Posterior cingulate gyrus (tissue), 11 donors: ENCODE measurements at regions of chr14 and their contacts with region 1.

Region 1: DNA sequence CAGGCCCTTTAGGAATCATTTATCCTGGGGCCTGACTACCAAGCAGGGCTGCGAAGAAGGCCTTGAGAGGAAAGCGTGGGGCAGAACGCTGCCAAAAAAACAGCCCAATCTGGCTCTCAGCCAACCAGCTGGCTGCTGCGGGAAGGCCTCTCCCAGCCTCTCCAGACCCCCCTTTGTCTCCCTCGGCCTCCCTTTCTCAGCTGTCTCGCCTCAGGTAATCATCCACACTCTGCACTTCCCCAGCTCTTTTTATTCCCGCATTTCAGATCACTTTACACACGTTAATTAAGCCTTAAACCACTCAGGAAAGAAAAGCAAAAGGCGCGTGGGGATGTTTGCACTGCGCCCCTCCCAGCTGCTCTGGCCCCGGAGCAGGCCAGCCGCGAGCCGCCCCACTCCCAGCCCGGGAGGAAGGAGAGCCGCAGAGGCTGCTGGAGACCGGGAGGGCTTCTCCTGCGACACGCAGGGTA is 208.2 kb upstream of the FOXN3 start:
- DNase-seq: peak in 5 of 10 donors; percentile 21 to 90 (median 52)

Region 2: DNA sequence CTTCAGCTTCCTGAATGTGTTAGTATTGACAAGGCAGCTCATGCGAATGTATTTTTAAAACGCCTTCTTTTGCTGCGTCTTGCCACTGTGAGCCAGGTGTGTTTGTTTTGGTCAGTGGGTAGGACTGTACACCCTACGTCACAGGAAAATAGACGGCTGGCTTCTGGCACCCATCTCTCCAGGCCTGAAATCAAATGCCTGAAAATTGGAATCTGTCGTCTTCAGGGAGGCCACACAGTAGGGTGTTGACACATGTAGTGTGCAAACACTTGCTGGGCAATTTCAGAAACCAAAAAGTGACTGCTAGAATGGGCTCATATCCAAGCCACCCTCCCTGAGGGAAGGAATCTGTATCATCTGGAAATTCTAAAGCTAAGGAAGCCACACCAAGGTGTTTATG is 591.5 kb before region 1 on chr14:
- intact Hi-C with region 1: loop called (anchors 10 kb)
- DNase-seq: no peak

Region 3: DNA sequence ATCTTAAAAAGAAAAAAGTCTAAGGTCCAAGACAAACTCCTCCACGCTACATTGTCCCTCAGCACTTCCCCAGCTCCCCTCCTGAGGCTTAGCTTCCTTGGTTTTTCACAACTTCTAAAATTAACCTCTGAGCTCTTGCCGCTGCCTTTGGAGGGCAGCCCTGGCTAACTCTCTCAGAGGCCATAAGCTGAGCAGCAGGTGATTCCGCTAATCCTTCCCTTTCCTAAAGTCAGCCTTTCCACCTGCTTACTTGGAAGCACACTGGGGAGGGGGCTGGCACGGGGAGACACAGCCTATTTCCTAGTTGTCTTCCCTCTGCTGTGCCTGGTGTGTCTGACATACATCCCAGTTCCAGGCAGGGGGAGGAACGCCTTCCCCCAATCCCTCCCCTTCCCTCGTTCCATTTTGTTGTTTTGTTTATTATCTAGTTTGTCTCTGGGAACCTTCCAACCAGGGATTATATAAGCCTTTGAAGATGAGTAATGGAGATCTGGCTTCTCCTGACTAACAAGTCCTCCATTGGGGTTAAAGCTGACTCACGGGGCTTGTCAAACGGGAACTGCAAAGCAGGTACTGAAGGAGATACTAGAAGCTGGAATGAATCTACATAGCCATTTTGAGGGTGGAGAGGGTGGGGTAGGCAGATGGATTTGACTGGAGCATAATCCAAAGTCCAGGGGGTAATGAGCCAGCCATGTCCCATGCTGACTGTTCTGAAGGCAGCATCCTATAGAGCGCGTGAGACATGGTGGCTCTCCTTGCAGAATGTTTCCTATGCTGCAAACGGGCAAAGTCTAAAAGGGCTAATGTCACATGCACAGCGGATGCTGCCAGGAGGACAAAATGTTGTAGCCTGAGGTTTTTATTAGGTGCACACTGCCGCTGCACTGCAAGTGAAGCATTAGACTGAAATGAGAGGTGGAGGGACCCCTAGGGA is 439.1 kb before region 1 on chr14:
- intact Hi-C with region 1: loop called (anchors 10 kb)
- DNase-seq: no peak

Region 4: GRCh38 chr14:89669193-89669592 is 43.9 kb after region 1 on chr14:
- intact Hi-C with region 1: no loop called
- DNase-seq: peak in 9 of 10 donors; percentile 11 to 80 (median 35)

Region 5: DNA sequence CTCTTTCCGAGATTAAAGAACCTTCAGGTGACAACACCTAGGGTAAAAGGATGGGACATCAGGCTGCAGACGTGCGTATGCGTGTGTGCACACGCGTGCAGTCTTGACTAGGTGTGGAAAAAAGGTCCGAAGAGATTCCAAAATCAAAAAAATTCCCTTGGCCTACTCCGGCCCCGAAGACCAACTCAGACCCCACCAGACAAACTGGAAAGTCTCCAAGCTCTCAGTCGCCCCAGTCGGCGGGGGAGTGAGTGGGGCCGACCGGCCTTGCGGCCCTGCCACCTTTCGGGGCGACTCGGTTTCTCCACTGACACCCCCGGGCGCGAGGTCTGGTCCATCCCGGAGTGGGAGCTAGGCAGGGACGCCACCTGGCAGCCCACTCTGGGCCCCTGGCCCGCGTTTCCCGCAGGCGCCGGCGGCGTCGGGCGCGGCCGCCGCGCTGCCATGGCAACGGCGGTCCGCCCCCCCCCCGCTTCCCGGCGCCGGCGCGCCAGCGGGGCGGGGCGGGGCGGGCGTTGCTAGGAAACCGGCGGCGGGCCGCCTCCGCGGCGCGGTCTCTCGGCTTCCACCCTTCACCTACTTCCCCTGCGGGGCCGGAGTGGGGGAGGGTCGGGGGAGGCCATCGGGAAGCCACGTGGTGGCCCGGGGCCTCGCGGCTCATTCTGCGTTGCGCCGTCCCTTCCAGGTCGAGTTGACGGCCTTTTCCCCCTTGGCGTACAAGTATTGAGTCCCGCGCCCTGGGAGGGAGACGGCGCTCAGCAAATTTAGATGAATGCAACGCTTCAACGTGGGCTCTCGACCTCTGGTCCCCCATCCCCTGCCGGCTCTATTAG is 76.1 kb after region 1 on chr14:
- intact Hi-C with region 1: no loop called
- DNase-seq: peak; percentile 52 to 95 (median 76)